GM12878 (cell line): ENCODE measurements at regions of chr2 and their contacts with region 1.

Region 1: GRCh38 chr2:157413326-157414035 is 30.4 kb downstream of the CYTIP start:
- DNase-seq: peak; percentile 97
- ATAC-seq: peak; percentile 87
- H3K4me3 ChIP-seq: no peak overlapping the region
- H3K27ac ChIP-seq: peak overlapping the region; percentile 86
- H3K4me1 ChIP-seq: peaks cover 38% of the 10 kb centered on the region
- H3K27me3 ChIP-seq: no peaks in the 10 kb centered on the region
- CTCF ChIP-seq: no peak
- EP300 ChIP-seq: peak; percentile 71 to 74; a peak in 2 of 4 replicates
- POLR2A ChIP-seq: peak; percentile 18; the same call in 1 of the 2 replicates
- RAD21 ChIP-seq: peak; percentile 37

Region 2: DNA sequence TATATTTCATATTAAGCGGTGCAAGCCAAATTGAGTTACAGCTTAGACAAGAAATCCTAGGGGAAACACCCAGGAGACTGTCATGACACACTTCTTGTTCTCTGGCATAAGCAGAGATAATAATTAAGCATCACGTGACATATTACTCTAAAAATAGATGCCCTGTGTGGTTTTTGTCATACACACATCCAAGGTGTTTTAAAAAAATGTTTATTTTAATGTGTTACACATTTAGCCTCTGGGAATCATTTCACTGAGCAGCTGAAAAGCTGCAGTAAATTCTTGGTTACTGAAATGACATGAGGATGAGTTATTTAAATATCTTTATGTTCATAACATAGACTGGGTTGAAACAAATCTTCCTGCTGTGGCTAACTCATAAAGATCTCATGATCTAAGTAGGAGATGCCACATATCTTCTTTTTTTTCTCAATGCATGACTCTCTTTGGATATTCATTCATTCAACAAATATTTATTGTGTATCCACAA is 49.8 kb before region 1 on chr2:
- CTCF ChIA-PET with region 1: interaction called, 4 read pairs
- POLR2A ChIA-PET with region 1: interaction called, 4 read pairs
- RAD21 ChIA-PET with region 1: interaction called, 7 read pairs
- SMC1A ChIA-PET with region 1: interaction called, 13 read pairs
- in situ Hi-C with region 1: no loop called
- intact Hi-C with region 1: loop called (anchors 1 kb)
- DNase-seq: peak; percentile 50
- ATAC-seq: peak; percentile 72
- H3K4me3 ChIP-seq: no peak overlapping the region
- H3K27ac ChIP-seq: peak overlapping the region; percentile 56
- H3K4me1 ChIP-seq: peaks cover 14% of the 10 kb centered on the region
- H3K27me3 ChIP-seq: no peaks in the 10 kb centered on the region
- CTCF ChIP-seq: no peak
- EP300 ChIP-seq: no peak
- POLR2A ChIP-seq: no peak
- RAD21 ChIP-seq: no peak